Heart left ventricle (tissue), 16 donors: ENCODE measurements at regions of chr7 and their contacts with region 1.

Region 1: GRCh38 chr7:99408379-99409191 is at the starts of genes BUD31 and PDAP1:
- DNase-seq: peak; percentile 94 to 96 (median 95)
- ATAC-seq: peak; percentile 91 to 96 (median 96)
- H3K4me3 ChIP-seq: peak within 1 kb of the TSS; percentile 68 to 100 (median 96)
- H3K27ac ChIP-seq: peak within 1 kb of the TSS; percentile 93 to 99 (median 98)
- H3K4me1 ChIP-seq: peaks cover 13 to 51% (median 42%) of the 10 kb centered on the region in 12 donors
- H3K27me3 ChIP-seq: no peaks in the 10 kb centered on the region
- CTCF ChIP-seq: peak in 2 of 12 donors; percentile 19 to 23
- POLR2A ChIP-seq: peak in 1 of 2 donors; percentile 69
- total RNA-seq, gene BUD31: 26.1 to 63.6 (median 38.9) TPM
- total RNA-seq, gene PDAP1: 88.7 to 128 (median 98.5) TPM

Region 2: GRCh38 chr7:98280791-98281756 is 1127.5 kb before region 1 on chr7 and contains the start of gene BRI3:
- intact Hi-C with region 1: loop called in 1 of 10 experiments (anchors 10 kb)
- DNase-seq: peak; percentile 91 to 96 (median 94)
- ATAC-seq: peak; percentile 71 to 81 (median 76)
- H3K4me3 ChIP-seq: peak within 1 kb of the TSS; percentile 65 to 98 (median 86)
- H3K27ac ChIP-seq: peak within 1 kb of the TSS; percentile 79 to 99 (median 96)
- H3K4me1 ChIP-seq: peaks cover 16 to 54% (median 39%) of the 10 kb centered on the region in 12 donors
- H3K27me3 ChIP-seq: no peaks in the 10 kb centered on the region
- CTCF ChIP-seq: peak in 7 of 12 donors; percentile 12 to 59 (median 43)
- POLR2A ChIP-seq: peak in 1 of 2 donors; percentile 93
- total RNA-seq, gene BRI3: 51.0 to 274 (median 223) TPM

Region 3: DNA sequence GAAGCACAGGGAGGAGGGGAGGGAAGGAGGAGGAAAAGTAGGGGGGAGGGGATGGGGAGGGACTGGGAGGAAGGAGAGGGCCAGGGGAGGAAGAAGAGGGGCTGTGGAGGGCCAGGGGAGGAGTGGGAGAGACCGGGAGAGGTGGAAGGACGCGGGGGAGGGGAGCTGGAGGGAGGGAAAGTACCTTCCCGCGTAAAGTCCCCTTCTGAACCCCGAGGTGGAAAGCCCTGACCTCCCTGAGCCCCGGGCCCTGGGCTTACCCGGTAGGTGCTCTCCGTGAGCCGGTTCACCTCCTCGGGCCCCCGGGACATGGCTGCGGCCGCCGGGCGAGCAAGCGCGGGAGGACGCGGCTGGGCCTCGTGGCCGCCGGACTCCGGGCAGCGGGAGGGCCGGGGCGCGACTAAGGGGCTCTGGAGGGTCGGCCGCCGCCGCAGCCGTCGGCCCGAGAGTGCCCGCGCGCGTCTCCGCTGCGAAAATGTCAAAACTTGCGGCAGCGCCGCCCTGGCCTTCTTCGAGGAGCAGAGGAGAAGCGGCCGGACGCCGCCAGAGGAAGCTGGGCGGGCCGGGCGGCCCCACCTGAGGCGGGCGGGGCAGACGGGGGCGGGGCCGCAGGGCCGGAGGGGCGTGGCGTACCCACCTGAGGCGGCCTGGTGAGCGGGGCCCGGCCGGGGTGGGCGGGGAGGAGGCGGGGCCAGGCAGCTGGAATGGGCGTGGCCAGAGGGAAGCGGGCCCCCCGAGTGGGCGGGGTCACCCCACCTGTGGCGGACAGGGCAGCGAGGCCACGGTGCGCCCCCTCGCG is 1007.8 kb before region 1 on chr7 and contains the start of gene BAIAP2L1:
- intact Hi-C with region 1: loop called in 1 of 10 experiments (anchors 5 kb)
- DNase-seq: peak; percentile 75 to 91 (median 81)
- ATAC-seq: peak; percentile 76 to 98 (median 94)
- H3K4me3 ChIP-seq: peak within 1 kb of the TSS; percentile 52 to 89 (median 66)
- H3K27ac ChIP-seq: peak within 1 kb of the TSS; percentile 29 to 85 (median 68)
- H3K4me1 ChIP-seq: peaks cover 0 to 12% (median 6%) of the 10 kb centered on the region in 12 donors
- H3K27me3 ChIP-seq: peaks cover 0 to 27% (median 12%) of the 10 kb centered on the region in 9 donors
- CTCF ChIP-seq: peak in 4 of 12 donors; percentile 62 to 80 (median 68)
- POLR2A ChIP-seq: peak in 1 of 2 donors; percentile 28
- total RNA-seq, gene BAIAP2L1: 0.64 to 2.7 (median 1.8) TPM

Region 4: DNA sequence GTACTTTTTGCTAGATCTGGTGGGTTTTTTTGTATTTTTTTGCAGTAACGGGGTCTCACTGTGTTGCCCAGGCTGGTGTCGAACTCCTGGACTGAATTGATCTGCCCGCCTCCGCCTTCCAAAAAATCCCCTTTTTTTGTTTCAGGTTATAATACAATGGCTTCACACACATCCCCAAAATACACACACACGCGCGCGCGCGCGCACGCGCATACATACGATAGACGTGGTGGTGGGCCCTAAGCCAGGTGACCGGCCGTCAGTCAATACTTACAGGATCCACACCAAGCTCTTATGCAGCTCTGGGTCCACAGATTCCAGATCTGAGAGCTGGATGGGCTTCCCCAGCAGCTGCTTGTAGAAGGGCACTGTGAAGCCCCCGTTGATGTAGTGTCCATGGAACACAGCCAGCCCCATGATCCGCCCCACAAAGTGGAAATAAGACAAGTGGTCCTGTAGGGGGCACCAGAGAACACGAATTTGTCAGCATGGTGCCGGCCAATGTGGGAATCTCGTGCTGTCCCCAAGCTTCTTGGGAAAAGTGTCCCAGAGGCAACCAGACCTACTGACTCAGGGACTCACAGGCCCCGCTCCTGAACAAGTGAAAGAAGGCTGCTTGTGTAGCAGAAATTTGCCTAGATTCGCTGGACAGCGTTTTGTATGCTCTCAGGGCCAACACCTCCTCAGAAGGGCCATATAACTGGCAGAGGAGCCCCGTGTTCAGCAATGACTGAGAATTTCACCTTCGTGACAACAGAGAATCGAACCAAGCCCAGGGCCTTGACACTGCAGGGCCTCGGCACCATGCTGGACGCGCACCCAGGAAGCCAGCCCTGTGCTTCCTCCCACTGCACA is 368.3 kb before region 1 on chr7:
- intact Hi-C with region 1: loop called in 1 of 10 experiments (anchors 10 kb)
- DNase-seq: peak; percentile 78 to 91 (median 85)
- ATAC-seq: peak; percentile 74 to 84 (median 82)
- H3K4me3 ChIP-seq: no peak overlapping the region
- H3K27ac ChIP-seq: peak overlapping the region in 11 of 12 donors; percentile 32 to 70 (median 46)
- H3K4me1 ChIP-seq: peaks cover 0 to 34% (median 4%) of the 10 kb centered on the region in 12 donors
- H3K27me3 ChIP-seq: no peaks in the 10 kb centered on the region
- CTCF ChIP-seq: peak; percentile 68 to 85 (median 76)
- POLR2A ChIP-seq: no peak

Region 5: GRCh38 chr7:99364961-99365817 is 43.4 kb before region 1 on chr7:
- intact Hi-C with region 1: loop called in 3 of 10 experiments (anchors 5 to 10 kb)
- DNase-seq: peak in 1 of 5 donors; percentile 48
- ATAC-seq: peak in 3 of 4 donors; percentile 63 to 66 (median 63)
- H3K4me3 ChIP-seq: no peak overlapping the region
- H3K27ac ChIP-seq: no peak overlapping the region
- H3K4me1 ChIP-seq: no peaks in the 10 kb centered on the region
- H3K27me3 ChIP-seq: no peaks in the 10 kb centered on the region
- CTCF ChIP-seq: peak in 11 of 12 donors; percentile 33 to 61 (median 53)
- POLR2A ChIP-seq: no peak

Region 6: GRCh38 chr7:99374103-99375064 is 34.2 kb before region 1 on chr7 and contains the start of gene ARPC1B:
- intact Hi-C with region 1: loop called in 7 of 10 experiments (anchors 1 to 10 kb)
- DNase-seq: peak; percentile 87 to 93 (median 90)
- ATAC-seq: peak; percentile 16 to 77 (median 69)
- H3K4me3 ChIP-seq: peak within 1 kb of the TSS; percentile 71 to 96 (median 90)
- H3K27ac ChIP-seq: peak within 1 kb of the TSS; percentile 87 to 97 (median 94)
- H3K4me1 ChIP-seq: peaks cover 0 to 58% (median 20%) of the 10 kb centered on the region in 12 donors
- H3K27me3 ChIP-seq: no peaks in the 10 kb centered on the region
- CTCF ChIP-seq: no peak
- POLR2A ChIP-seq: peak in 1 of 2 donors; percentile 55
- total RNA-seq, gene ARPC1B: 17.2 to 142 (median 37.1) TPM

Region 7: GRCh38 chr7:99392677-99393354 is 15.8 kb before region 1 on chr7:
- intact Hi-C with region 1: loop called in 1 of 10 experiments (anchors 1 kb)
- DNase-seq: peak; percentile 79 to 85 (median 83)
- ATAC-seq: peak; percentile 73 to 85 (median 82)
- H3K4me3 ChIP-seq: peak overlapping the region; percentile 27 to 68 (median 57)
- H3K27ac ChIP-seq: peak overlapping the region; percentile 12 to 79 (median 66)
- H3K4me1 ChIP-seq: peaks cover 0 to 21% (median 15%) of the 10 kb centered on the region in 12 donors
- H3K27me3 ChIP-seq: no peaks in the 10 kb centered on the region
- CTCF ChIP-seq: peak in 1 of 12 donors; percentile 21
- POLR2A ChIP-seq: peak in 1 of 2 donors; percentile 52

Region 8: GRCh38 chr7:99459087-99459486 is 50.5 kb after region 1 on chr7:
- intact Hi-C with region 1: no loop called
- DNase-seq: no peak
- ATAC-seq: no peak
- H3K4me3 ChIP-seq: no peak overlapping the region
- H3K27ac ChIP-seq: no peak overlapping the region
- H3K4me1 ChIP-seq: peaks cover 8 to 48% (median 23%) of the 10 kb centered on the region in 12 donors
- H3K27me3 ChIP-seq: no peaks in the 10 kb centered on the region
- CTCF ChIP-seq: peak in 3 of 12 donors; percentile 19 to 34 (median 23)
- POLR2A ChIP-seq: no peak

Region 9: DNA sequence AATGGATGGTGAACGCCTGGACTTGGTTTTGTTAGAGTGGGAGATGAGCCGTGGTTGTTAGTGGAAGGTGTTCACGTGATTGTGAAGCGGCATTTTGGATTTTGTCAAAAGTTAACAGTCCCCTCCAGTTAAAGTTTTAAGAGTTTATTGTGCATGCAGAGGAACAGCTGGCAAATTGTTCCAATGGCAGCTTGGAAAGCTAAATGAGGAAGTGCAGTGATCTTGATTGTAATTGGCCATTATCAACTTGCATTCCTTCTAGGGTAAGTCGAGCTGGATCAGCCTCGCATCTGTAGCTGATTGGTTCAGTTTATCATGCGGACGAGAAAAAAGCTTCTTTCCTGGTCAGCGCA is 64.6 kb after region 1 on chr7:
- intact Hi-C with region 1: no loop called
- DNase-seq: no peak
- ATAC-seq: peak in 1 of 4 donors; percentile 15
- H3K4me3 ChIP-seq: peak overlapping the region; percentile 38 to 96 (median 82)
- H3K27ac ChIP-seq: peak overlapping the region in 10 of 12 donors; percentile 77 to 95 (median 88)
- H3K4me1 ChIP-seq: peaks cover 0 to 30% (median 13%) of the 10 kb centered on the region in 12 donors
- H3K27me3 ChIP-seq: no peaks in the 10 kb centered on the region
- CTCF ChIP-seq: no peak
- POLR2A ChIP-seq: no peak